Sigmoid colon (tissue), 7 donors: ENCODE measurements at regions of chr14 and their contacts with region 1.

Region 1: GRCh38 chr14:20454516-20455354 is at the starts of genes APEX1 and OSGEP:
- DNase-seq: peak; percentile 99
- H3K4me3 ChIP-seq: peak within 1 kb of the TSS; percentile 53 to 72 (median 66)
- H3K27ac ChIP-seq: peak within 1 kb of the TSS; percentile 90 to 93 (median 92)
- H3K4me1 ChIP-seq: peaks cover 0 to 39% (median 27%) of the 10 kb centered on the region in 4 donors
- H3K27me3 ChIP-seq: no peaks in the 10 kb centered on the region
- CTCF ChIP-seq: no peak
- EP300 ChIP-seq: peak in 1 of 4 donors; percentile 3
- POLR2A ChIP-seq: peak; percentile 81 to 82
- total RNA-seq, gene APEX1: 118 to 181 (median 146) TPM
- total RNA-seq, gene OSGEP: 34.1 to 65.6 (median 50.7) TPM

Region 2: DNA sequence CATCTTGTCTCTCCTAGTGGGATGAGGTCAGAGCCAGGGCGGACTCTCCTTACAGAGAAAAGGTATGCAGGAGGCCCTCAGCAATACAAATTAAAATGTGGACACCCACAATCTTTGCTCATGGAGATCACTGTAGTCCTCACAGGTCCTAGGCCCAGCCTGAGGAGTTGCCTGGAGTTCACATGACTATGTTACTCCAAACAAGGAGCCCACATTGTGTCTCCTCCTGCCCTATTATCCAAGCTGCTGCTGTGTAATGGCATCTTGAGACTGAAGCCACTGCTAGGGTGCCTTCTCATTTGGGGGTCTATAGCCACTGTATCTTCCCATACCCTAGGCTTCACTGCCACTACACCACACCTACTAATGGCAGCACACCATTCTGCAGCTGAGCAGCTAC is 513.1 kb before region 1 on chr14:
- intact Hi-C with region 1: no loop called
- DNase-seq: no peak
- H3K4me3 ChIP-seq: no peak overlapping the region
- H3K27ac ChIP-seq: no peak overlapping the region
- H3K4me1 ChIP-seq: no peaks in the 10 kb centered on the region
- H3K27me3 ChIP-seq: no peaks in the 10 kb centered on the region
- CTCF ChIP-seq: no peak
- EP300 ChIP-seq: no peak
- POLR2A ChIP-seq: no peak

Region 3: GRCh38 chr14:20327005-20327869 is 127.5 kb before region 1 on chr14:
- intact Hi-C with region 1: loop called (anchors 5 kb)
- DNase-seq: no peak
- H3K4me3 ChIP-seq: no peak overlapping the region
- H3K27ac ChIP-seq: peak overlapping the region; percentile 15 to 62 (median 40)
- H3K4me1 ChIP-seq: peaks cover 0 to 29% (median 15%) of the 10 kb centered on the region in 4 donors
- H3K27me3 ChIP-seq: no peaks in the 10 kb centered on the region
- CTCF ChIP-seq: peak; percentile 31 to 71 (median 55)
- EP300 ChIP-seq: no peak
- POLR2A ChIP-seq: no peak

Region 4: DNA sequence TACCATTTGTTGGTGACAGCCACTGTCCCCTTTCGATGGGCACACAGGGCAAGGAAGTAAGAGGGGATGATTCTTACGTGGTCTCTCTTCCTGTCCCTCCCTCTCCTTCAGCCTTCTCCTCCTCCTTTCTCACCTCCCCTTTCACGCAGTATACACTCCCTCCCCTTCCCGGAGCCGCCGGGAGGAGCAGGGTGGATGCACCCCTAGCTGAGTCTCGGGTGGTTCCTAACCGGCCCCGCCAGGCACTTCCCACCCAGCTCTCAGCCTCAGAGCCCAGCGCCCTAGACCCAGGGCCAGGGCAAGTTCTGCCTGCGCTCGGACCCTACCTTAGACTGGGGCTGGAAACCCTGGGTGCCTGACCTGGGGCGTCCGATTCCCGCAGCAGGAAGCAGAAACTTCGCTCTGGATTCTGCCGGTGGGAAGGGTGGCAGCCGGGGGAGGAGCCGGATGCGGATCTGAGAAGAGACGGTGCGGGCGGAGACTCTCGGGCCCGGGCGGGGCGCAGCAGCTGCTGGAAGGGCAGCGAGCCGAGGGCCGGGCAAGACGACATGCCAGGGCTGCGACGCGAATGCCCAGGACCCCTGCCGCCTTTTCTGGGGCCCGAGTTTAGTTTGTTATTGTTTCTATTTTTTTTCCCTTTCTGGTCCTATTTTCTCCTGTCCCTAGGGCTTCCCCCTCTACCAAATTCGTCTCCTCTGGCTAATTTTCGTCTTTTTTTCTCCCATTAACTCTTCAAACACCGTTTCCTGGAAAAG is 41.5 kb before region 1 on chr14 and contains the start of gene TEP1:
- intact Hi-C with region 1: loop called (anchors 2 kb)
- DNase-seq: peak; percentile 95
- H3K4me3 ChIP-seq: peak within 1 kb of the TSS; percentile 64 to 87 (median 77)
- H3K27ac ChIP-seq: peak within 1 kb of the TSS; percentile 94 to 96 (median 96)
- H3K4me1 ChIP-seq: peaks cover 0 to 19% (median 13%) of the 10 kb centered on the region in 4 donors
- H3K27me3 ChIP-seq: no peaks in the 10 kb centered on the region
- CTCF ChIP-seq: no peak
- EP300 ChIP-seq: no peak
- POLR2A ChIP-seq: peak; percentile 50 to 64
- total RNA-seq, gene TEP1: 12.7 to 42.7 (median 19.6) TPM

Region 5: GRCh38 chr14:21112255-21112654 is 657.5 kb after region 1 on chr14:
- intact Hi-C with region 1: no loop called
- DNase-seq: no peak
- H3K4me3 ChIP-seq: no peak overlapping the region
- H3K27ac ChIP-seq: no peak overlapping the region
- H3K4me1 ChIP-seq: peaks cover 0 to 2% (median 1%) of the 10 kb centered on the region in 4 donors
- H3K27me3 ChIP-seq: no peaks in the 10 kb centered on the region
- CTCF ChIP-seq: no peak
- EP300 ChIP-seq: no peak
- POLR2A ChIP-seq: no peak